ENCODE measurements at regions of chr6 and their contacts with region 1.

Region 1: GRCh38 chr6:34602318-34603111 is 46.4 kb upstream of the SPDEF start:
- DNase-seq: no peak
- H3K4me3 ChIP-seq: no peak overlapping the region
- H3K4me1 ChIP-seq: peaks cover 4% of the 10 kb centered on the region; the same call in 1 of the 2 replicates
- H3K27me3 ChIP-seq: no peaks in the 10 kb centered on the region

Region 2: DNA sequence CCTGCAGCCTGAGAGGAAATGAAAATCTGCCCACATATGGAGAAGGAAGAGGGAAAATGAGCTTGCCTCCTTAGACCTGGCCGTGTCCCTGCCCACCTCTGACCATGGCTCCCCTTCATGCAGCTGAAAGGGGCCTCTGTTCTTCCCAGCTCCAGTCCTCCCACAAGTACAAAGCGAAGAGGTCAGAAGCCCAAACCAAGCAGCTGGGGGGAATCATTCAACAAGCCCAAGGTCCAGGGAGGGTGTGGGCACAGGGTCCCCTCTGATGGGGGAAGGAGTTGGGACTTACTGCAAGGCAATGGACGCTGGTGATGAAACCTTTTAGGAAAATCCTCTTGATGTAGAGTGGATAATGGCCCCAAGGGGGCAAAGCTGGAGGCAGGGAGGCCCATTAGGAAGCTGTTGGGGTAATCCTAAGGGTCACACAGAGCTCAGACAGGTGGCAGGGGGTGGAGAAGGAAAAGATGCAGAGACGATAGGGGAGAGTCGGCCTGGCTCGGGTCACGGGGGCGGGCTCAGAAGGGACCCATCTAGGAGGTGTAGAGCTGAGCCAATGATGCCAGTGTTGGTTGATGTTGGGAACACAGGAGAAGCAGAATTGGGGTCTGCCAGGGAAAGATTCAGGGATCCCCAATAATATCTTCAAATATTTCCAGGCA is 440.5 kb before region 1 on chr6:
- in situ Hi-C with region 1: loop called (anchors 10 kb)
- DNase-seq: no peak
- H3K4me3 ChIP-seq: no peak overlapping the region
- H3K4me1 ChIP-seq: no peaks in the 10 kb centered on the region
- H3K27me3 ChIP-seq: peaks cover 3% of the 10 kb centered on the region; the same call in 1 of the 2 replicates

Region 3: GRCh38 chr6:34248727-34249551 is 353.6 kb before region 1 on chr6 and contains the start of gene SMIM29:
- in situ Hi-C with region 1: loop called (anchors 10 kb)
- DNase-seq: peak; percentile 95 to 97
- H3K4me3 ChIP-seq: peak within 1 kb of the TSS; percentile 72
- H3K4me1 ChIP-seq: peaks cover 20% of the 10 kb centered on the region
- H3K27me3 ChIP-seq: no peaks in the 10 kb centered on the region

Measured in HAP-1 (cell line).